ENCODE measurements at regions of chr9 and their contacts with region 1.

Region 1: DNA sequence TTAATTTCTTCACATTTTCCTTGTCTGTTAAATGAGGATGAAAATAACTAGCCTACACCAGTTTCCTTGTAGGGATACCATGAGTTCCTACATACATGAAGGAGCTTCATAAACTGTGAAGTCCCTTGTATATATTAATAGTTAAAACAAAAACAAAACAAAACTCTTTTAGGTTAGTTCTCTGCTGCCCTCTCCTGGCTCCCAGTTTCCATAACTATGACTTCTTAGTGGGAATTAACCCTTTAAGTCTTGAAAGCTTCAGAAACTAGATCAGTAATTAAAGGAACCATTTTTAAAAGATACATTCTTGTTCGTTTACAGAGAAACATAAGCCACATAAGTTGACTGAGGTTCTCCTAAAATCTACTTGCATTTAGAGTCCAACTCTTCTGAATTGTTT is 500.0 kb upstream of the C9orf72 start:
- DNase-seq: peak in 2 of 6 donors; percentile 3 to 15
- ATAC-seq: peak in 3 of 4 donors; percentile 68 to 75 (median 69)
- H3K4me3 ChIP-seq: no peak overlapping the region
- H3K27ac ChIP-seq: no peak overlapping the region
- H3K4me1 ChIP-seq: no peaks in the 10 kb centered on the region
- H3K27me3 ChIP-seq: no peaks in the 10 kb centered on the region
- CTCF ChIP-seq: peak in 2 of 4 donors; percentile 8 to 24

Region 2: GRCh38 chr9:27732494-27732893 is 340.8 kb before region 1 on chr9:
- intact Hi-C with region 1: loop called in 2 of 3 experiments (anchors 10 kb)
- DNase-seq: no peak
- ATAC-seq: no peak
- H3K4me3 ChIP-seq: no peak overlapping the region
- H3K27ac ChIP-seq: no peak overlapping the region
- H3K4me1 ChIP-seq: no peaks in the 10 kb centered on the region
- H3K27me3 ChIP-seq: no peaks in the 10 kb centered on the region
- CTCF ChIP-seq: no peak

Measured in pancreas (tissue), 10 donors.